PC-9 (cell line): ENCODE measurements at regions of chr17 and their contacts with region 1.

Region 1: DNA sequence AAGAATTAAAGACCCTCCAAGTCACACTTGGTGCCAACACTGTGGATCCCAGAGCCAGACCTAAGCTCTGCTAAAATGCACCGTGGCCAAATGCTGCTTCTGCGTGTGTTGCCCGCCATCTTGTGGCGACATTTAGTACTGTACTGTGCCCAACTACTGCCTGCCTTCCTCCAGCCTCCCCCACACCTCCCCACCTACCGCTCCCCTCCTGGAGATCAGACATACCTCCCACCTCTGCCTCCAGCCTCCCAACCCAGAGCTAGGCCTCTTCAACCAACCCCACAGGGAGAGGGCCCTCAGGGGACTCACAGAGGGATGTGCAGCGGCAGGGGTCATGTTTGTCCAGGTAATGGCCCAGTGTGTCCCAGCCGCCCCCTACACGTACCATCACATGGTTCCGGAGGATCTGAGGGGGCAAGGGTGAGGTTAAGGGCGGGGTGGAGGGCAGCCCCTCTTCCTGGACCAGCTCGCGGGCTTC is 5.5 kb downstream of the GAS2L2 start:
- DNase-seq: peak in 1 of 2 experiments; percentile 68
- H3K4me3 ChIP-seq: no peak overlapping the region
- H3K27ac ChIP-seq: no peak overlapping the region
- H3K4me1 ChIP-seq: no peaks in the 10 kb centered on the region
- H3K27me3 ChIP-seq: peaks cover 44% of the 10 kb centered on the region
- CTCF ChIP-seq: peak; percentile 89

Region 2: GRCh38 chr17:35537601-35538141 is 209.9 kb before region 1 on chr17 and contains the start of gene SLFN12L:
- CTCF ChIA-PET with region 1: no interaction called
- POLR2A ChIA-PET with region 1: no interaction called
- intact Hi-C with region 1: loop called (anchors 5 kb)
- DNase-seq: no peak
- H3K4me3 ChIP-seq: no peak within 1 kb of the TSS
- H3K27ac ChIP-seq: no peak within 1 kb of the TSS
- H3K4me1 ChIP-seq: no peaks in the 10 kb centered on the region
- H3K27me3 ChIP-seq: no peaks in the 10 kb centered on the region
- CTCF ChIP-seq: no peak
- total RNA-seq, gene SLFN12L: not detected in 2 replicates

Region 3: GRCh38 chr17:35612924-35613521 is 134.6 kb before region 1 on chr17:
- CTCF ChIA-PET with region 1: interaction called, 4 read pairs
- POLR2A ChIA-PET with region 1: no interaction called
- intact Hi-C with region 1: loop called (anchors 1 kb)
- DNase-seq: peak; percentile 9 to 51
- H3K4me3 ChIP-seq: no peak overlapping the region
- H3K27ac ChIP-seq: no peak overlapping the region
- H3K4me1 ChIP-seq: no peaks in the 10 kb centered on the region
- H3K27me3 ChIP-seq: no peaks in the 10 kb centered on the region
- CTCF ChIP-seq: peak; percentile 74

Region 4: DNA sequence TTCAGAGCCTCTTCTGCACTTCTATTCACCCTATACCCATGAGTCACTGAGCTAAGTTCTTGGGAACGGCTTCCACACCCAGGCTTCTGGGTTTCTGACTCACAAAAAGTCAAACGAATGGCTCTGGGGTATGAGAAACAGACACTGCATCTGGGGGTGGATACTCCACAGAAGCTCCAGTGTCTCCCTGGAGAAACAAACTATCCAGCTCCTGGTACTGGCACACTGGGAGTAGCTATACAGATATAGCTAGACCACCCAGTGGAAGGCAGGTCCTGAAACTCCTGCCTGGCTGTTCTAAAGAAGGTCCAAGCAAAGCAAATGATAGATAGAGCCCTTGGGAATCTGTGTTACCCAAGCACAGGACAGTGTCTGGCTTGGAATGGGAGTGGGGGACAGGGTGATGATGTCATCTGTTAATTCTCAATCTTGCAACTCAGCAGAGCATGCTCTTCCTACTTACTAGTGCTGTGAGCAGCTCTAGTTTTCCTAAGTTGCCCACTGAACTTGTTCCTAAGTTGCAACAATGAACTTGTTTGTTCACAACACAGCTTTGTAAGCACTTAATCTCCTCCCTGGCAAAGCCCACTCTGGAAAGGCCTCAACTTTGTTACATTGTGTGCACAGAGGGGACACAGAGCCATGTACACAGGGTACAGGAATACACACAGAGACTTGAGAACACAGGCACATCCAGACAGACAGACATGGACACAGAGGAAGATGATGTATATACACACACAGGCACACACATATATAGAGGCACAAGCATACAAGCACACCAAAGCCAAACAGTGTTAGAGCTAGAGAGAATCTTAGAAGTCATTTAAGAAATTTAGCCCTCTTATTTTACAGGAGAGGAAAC is 41.2 kb after region 1 on chr17:
- CTCF ChIA-PET with region 1: no interaction called
- POLR2A ChIA-PET with region 1: no interaction called
- intact Hi-C with region 1: no loop called
- DNase-seq: peak in 1 of 2 experiments; percentile 85
- H3K4me3 ChIP-seq: no peak overlapping the region; the same call in 1 of the 2 replicates
- H3K27ac ChIP-seq: peak overlapping the region; percentile 80
- H3K4me1 ChIP-seq: peaks cover 66% of the 10 kb centered on the region
- H3K27me3 ChIP-seq: peaks cover 6% of the 10 kb centered on the region; the same call in 1 of the 2 replicates
- CTCF ChIP-seq: no peak

Region 5: GRCh38 chr17:36148559-36149295 is 401.1 kb after region 1 on chr17:
- CTCF ChIA-PET with region 1: no interaction called
- POLR2A ChIA-PET with region 1: no interaction called
- intact Hi-C with region 1: loop called (anchors 5 kb)
- DNase-seq: peak in 1 of 2 experiments; percentile 41
- H3K4me3 ChIP-seq: no peak overlapping the region
- H3K27ac ChIP-seq: no peak overlapping the region
- H3K4me1 ChIP-seq: no peaks in the 10 kb centered on the region
- H3K27me3 ChIP-seq: peaks cover 45% of the 10 kb centered on the region
- CTCF ChIP-seq: peak; percentile 95